CD8-positive, alpha-beta T cell (primary cell): ENCODE measurements at regions of chr21 and their contacts with region 1.

Region 1: DNA sequence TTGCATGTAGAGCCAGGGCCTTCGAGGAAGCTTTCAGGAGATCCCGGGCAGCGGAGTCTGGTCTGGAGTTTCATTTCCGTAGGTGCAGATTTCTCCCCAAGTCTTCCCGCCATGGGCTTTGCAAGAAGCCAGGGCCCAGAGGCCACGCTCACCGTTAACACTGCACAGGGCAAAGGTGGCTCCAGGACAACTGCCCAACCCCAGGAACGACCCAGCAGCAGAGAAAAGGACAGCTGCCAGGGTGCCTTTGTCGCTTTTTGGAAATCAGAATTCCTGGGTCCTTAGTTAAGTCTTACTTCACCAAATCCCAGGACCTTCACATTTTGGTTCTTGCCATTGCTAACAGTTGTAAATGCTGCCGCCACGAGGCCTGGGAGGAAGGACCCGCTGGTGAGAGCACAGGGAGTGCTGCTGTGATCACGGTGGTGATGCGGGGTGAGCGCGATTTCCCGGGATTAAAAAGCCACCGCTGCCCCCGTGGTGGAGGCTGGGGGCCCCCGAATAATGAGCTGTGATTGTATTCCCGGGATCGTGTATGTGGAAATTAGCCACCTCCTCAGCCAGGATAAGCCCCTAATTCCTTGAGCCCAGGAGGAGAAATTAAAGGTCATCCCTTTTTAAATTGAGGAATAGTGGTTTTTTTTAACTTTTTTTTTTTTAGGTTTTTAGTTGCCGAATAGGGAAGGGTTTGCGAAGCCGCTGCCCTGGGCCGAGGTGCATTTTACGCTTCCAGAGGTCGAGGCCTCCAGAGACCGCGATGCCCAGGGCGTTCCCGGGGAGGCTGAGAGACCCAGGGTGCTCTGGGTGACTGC is 8.2 kb downstream of the SIM2 start:
- DNase-seq: no peak
- ATAC-seq: no peak
- H3K4me3 ChIP-seq: no peak overlapping the region
- H3K4me3 Mint-ChIP-seq: peak overlapping the region; percentile 58
- H3K27ac ChIP-seq: no peak overlapping the region
- H3K27ac Mint-ChIP-seq: no peak overlapping the region
- H3K4me1 ChIP-seq: peaks cover 55% of the 10 kb centered on the region
- H3K4me1 Mint-ChIP-seq: peaks cover 46% of the 10 kb centered on the region
- H3K27me3 ChIP-seq: peaks cover 32 to 49% of the 10 kb centered on the region in 2 experiments
- H3K27me3 Mint-ChIP-seq: peaks cover 72% of the 10 kb centered on the region
- CTCF ChIP-seq: no peak

Region 2: GRCh38 chr21:36589355-36589971 is 117.7 kb before region 1 on chr21:
- CTCF ChIA-PET with region 1: no interaction called
- POLR2A ChIA-PET with region 1: no interaction called
- intact Hi-C with region 1: loop called in 1 of 2 experiments (anchors 10 kb)
- DNase-seq: peak in 4 of 9 experiments; percentile 7 to 27 (median 12)
- ATAC-seq: no peak
- H3K4me3 ChIP-seq: no peak overlapping the region
- H3K4me3 Mint-ChIP-seq: no peak overlapping the region
- H3K27ac ChIP-seq: no peak overlapping the region
- H3K27ac Mint-ChIP-seq: no peak overlapping the region
- H3K4me1 ChIP-seq: no peaks in the 10 kb centered on the region
- H3K4me1 Mint-ChIP-seq: peaks cover 7% of the 10 kb centered on the region
- H3K27me3 ChIP-seq: no peaks in the 10 kb centered on the region
- H3K27me3 Mint-ChIP-seq: no peaks in the 10 kb centered on the region
- CTCF ChIP-seq: no peak